ENCODE measurements at regions of chr18 and their contacts with region 1.

Region 1: DNA sequence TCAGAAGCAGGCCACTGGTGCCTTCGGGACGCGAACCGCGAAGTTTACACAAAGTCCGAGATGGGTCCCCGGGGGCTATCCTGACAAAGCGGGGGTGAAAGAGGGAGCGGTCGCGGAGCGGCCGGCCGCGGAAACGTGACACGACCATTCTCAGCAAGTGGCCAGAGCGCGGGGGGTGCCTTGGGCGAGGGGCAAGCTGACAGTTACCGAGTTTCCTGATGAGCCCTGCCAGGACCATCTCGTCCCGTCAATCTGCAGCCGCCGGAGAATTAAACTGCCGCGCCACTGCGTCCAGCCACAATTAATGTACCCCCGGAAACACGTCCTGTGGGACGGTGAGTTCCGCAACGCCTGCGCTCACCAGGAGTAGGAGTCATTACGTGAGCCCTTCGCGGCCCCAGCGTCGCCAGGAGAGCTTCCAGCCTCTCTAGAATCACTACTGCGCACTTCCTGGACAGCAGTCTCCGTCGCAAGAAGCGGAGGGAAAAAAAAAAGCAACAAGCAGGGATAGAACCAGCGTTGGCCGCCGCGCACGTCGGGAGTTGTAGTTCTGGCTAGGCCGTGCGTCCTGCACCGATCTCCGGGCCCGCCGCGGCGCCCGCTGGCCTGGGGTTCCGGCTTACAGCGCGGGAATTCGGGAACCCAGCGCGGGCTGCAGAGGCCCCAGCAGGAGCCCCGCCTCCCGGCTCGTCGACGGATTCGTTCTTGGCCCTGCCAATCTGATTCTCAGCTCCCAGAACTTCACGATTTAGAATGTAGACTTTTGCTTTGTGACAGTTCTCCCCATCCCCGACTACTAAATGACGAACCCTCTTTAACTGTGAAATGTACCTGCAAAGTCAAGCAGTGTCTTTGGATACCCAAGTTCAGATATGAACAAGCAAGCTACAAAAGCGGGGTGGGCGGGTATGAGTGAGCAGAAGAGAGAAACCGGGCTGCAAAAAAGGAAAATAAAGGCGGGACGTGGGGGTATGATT is at the start of gene RTTN:
- DNase-seq: peak; percentile 88 to 96 (median 94)
- H3K4me3 ChIP-seq: peak within 1 kb of the TSS; percentile 55 to 98 (median 84)
- H3K27ac ChIP-seq: peak within 1 kb of the TSS; percentile 84 to 100 (median 99)
- H3K27me3 ChIP-seq: no peaks in the 10 kb centered on the region
- CTCF ChIP-seq: peak in 38 of 56 donors; percentile 8 to 56 (median 28)
- total RNA-seq, gene RTTN: 15.2 to 42.3 (median 25.8) TPM

Region 2: GRCh38 chr18:70288851-70289328 is 83.2 kb after region 1 on chr18 and contains the start of gene SOCS6:
- intact Hi-C with region 1: loop called (anchors 1 to 2 kb)
- DNase-seq: peak in 7 of 10 donors; percentile 21 to 73 (median 58)
- H3K4me3 ChIP-seq: peak within 1 kb of the TSS; percentile 45 to 86 (median 75)
- H3K27ac ChIP-seq: peak within 1 kb of the TSS; percentile 47 to 94 (median 83)
- H3K27me3 ChIP-seq: no peaks in the 10 kb centered on the region
- CTCF ChIP-seq: no peak
- total RNA-seq, gene SOCS6: 11.8 to 30.4 (median 19.8) TPM

Region 3: GRCh38 chr18:70384181-70384790 is 178.6 kb after region 1 on chr18:
- intact Hi-C with region 1: loop called (anchors 5 kb)
- DNase-seq: no peak
- H3K4me3 ChIP-seq: no peak overlapping the region
- H3K27ac ChIP-seq: peak overlapping the region in 53 of 59 donors; percentile 34 to 99 (median 94)
- H3K27me3 ChIP-seq: no peaks in the 10 kb centered on the region
- CTCF ChIP-seq: no peak

Measured in dorsolateral prefrontal cortex (tissue), 120 donors.